ENCODE measurements at regions of chr14 and their contacts with region 1.

Region 1: GRCh38 chr14:91228112-91229004 is 16.1 kb downstream of the GPR68 start:
- DNase-seq: peak; percentile 36 to 96 (median 75)
- ATAC-seq: peak; percentile 77
- H3K4me3 ChIP-seq: no peak overlapping the region
- H3K4me3 Mint-ChIP-seq: peak overlapping the region; percentile 65
- H3K27ac ChIP-seq: peak overlapping the region; percentile 6 to 85
- H3K27ac Mint-ChIP-seq: peak overlapping the region; percentile 94
- H3K4me1 ChIP-seq: peaks cover 87% of the 10 kb centered on the region
- H3K4me1 Mint-ChIP-seq: peaks cover 89% of the 10 kb centered on the region
- H3K27me3 ChIP-seq: no peaks in the 10 kb centered on the region
- H3K27me3 Mint-ChIP-seq: no peaks in the 10 kb centered on the region
- CTCF ChIP-seq: no peak

Region 2: GRCh38 chr14:91193069-91193468 is 35.3 kb before region 1 on chr14:
- CTCF ChIA-PET with region 1: no interaction called
- POLR2A ChIA-PET with region 1: no interaction called
- intact Hi-C with region 1: loop called (anchors 1 to 2 kb)
- DNase-seq: no peak
- ATAC-seq: no peak
- H3K4me3 ChIP-seq: no peak overlapping the region
- H3K4me3 Mint-ChIP-seq: no peak overlapping the region
- H3K27ac ChIP-seq: no peak overlapping the region
- H3K27ac Mint-ChIP-seq: no peak overlapping the region
- H3K4me1 ChIP-seq: peaks cover 13% of the 10 kb centered on the region
- H3K4me1 Mint-ChIP-seq: peaks cover 20% of the 10 kb centered on the region
- H3K27me3 ChIP-seq: no peaks in the 10 kb centered on the region
- H3K27me3 Mint-ChIP-seq: no peaks in the 10 kb centered on the region
- CTCF ChIP-seq: no peak

Region 3: DNA sequence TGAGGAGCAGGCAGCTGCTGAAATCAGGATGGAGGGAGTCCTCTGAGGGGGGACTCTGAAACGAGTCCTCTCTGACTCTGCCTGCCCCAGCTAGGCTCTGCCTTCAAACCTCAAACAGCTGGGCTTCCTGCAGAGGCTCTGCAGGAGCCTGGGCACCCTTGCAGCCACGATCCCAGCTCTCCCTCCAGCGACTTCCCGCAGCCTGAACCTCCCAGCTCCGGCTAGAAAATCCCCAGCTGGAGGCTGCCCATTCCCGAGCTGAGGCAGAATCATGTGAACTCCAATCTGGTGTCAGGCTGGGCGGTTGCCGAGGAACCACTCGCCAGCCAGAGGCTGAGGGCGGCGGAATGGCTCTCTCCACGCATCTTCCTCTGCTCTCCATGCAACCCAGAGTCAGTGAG is 16.1 kb after region 1 on chr14 and contains the start of gene GPR68:
- CTCF ChIA-PET with region 1: interaction called, 4 read pairs
- POLR2A ChIA-PET with region 1: interaction called, 90 read pairs
- intact Hi-C with region 1: loop called (anchors 1 kb)
- DNase-seq: peak in 5 of 9 experiments; percentile 38 to 69 (median 48)
- ATAC-seq: no peak
- H3K4me3 ChIP-seq: peak within 1 kb of the TSS; percentile 49 to 56
- H3K4me3 Mint-ChIP-seq: peak within 1 kb of the TSS; percentile 87
- H3K27ac ChIP-seq: peak within 1 kb of the TSS; percentile 68 to 92
- H3K27ac Mint-ChIP-seq: peak within 1 kb of the TSS; percentile 94
- H3K4me1 ChIP-seq: peaks cover 64% of the 10 kb centered on the region
- H3K4me1 Mint-ChIP-seq: peaks cover 89% of the 10 kb centered on the region
- H3K27me3 ChIP-seq: no peaks in the 10 kb centered on the region
- H3K27me3 Mint-ChIP-seq: no peaks in the 10 kb centered on the region
- CTCF ChIP-seq: no peak
- total RNA-seq, gene GPR68: 3.6 to 5.1 TPM

Region 4: GRCh38 chr14:91264151-91265150 is 36.1 kb after region 1 on chr14:
- CTCF ChIA-PET with region 1: no interaction called
- POLR2A ChIA-PET with region 1: interaction called, 6 read pairs
- intact Hi-C with region 1: loop called (anchors 5 kb)
- DNase-seq: peak in 5 of 9 experiments; percentile 21 to 67 (median 52)
- ATAC-seq: peak; percentile 45
- H3K4me3 ChIP-seq: peak overlapping the region in 1 of 2 experiments; percentile 28
- H3K4me3 Mint-ChIP-seq: peak overlapping the region; percentile 64
- H3K27ac ChIP-seq: no peak overlapping the region
- H3K27ac Mint-ChIP-seq: peak overlapping the region; percentile 32
- H3K4me1 ChIP-seq: peaks cover 19% of the 10 kb centered on the region
- H3K4me1 Mint-ChIP-seq: peaks cover 42% of the 10 kb centered on the region
- H3K27me3 ChIP-seq: no peaks in the 10 kb centered on the region
- H3K27me3 Mint-ChIP-seq: no peaks in the 10 kb centered on the region
- CTCF ChIP-seq: no peak

Measured in CD8-positive, alpha-beta T cell (primary cell).